ENCODE measurements at regions of chr5 and their contacts with region 1.

Region 1: GRCh38 chr5:143824851-143825720 is 13.1 kb downstream of the HMHB1 start:
- DNase-seq: peak; percentile 91

Region 2: DNA sequence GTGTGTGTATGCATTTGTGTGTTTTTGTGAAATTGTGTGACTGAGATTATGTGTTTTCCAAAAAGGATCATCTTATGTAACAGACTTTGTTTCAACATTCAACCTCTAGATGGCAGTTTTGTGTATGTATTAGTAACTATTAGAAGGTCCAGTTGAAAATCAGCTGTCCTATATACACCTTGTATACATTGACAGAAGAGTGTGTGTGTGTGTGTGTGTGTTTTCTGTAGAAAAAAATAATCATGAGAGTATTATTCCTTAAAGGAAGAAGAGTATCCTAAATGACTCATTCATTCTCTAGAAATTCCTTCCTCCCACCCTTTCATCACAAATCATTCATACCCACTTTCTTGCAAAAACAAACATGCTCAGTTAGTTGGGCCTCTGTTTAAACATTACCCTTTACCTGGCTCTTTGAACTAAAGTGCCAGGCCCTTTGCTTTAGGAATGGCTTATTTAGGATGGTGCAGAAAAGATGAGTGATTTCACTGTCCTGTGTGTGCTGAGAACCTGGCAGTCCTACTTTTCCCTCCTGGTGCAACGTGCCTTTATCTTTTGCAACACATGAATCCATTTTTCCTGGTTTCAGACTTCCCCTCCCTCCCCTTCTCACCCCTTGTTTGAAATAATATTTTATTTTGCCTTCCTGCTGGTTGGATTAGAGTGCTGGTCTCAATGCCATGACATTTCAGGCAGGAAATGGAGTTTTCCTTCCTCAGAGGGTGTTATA is 902.7 kb before region 1 on chr5:
- intact Hi-C with region 1: loop called in 1 of 2 experiments (anchors 5 kb)
- DNase-seq: no peak

Region 3: GRCh38 chr5:143860213-143860612 is 35.1 kb after region 1 on chr5:
- intact Hi-C with region 1: no loop called
- DNase-seq: no peak

Measured in posterior vena cava (tissue), 2 donors.